Activated CD8-positive, alpha-beta T cell treated with anti-CD3 and anti-CD28 coated beads, Interleukin-2, amount 10 ng/mL, durations not matched to agents 7 days and 5 days (primary cell): ENCODE measurements at regions of chr11 and their contacts with region 1.

Region 1: GRCh38 chr11:60363542-60364510 is 14.5 kb upstream of the MS4A7 start:
- DNase-seq: peak; percentile 73
- ATAC-seq: peak; percentile 65
- H3K4me3 Mint-ChIP-seq: no peak overlapping the region
- H3K27ac Mint-ChIP-seq: no peak overlapping the region
- H3K4me1 Mint-ChIP-seq: no peaks in the 10 kb centered on the region
- H3K27me3 Mint-ChIP-seq: peaks cover 14% of the 10 kb centered on the region

Region 2: GRCh38 chr11:60288531-60288930 is 75.3 kb before region 1 on chr11:
- CTCF ChIA-PET with region 1: no interaction called
- POLR2A ChIA-PET with region 1: no interaction called
- DNase-seq: no peak
- ATAC-seq: no peak
- H3K4me3 Mint-ChIP-seq: no peak overlapping the region
- H3K27ac Mint-ChIP-seq: no peak overlapping the region
- H3K4me1 Mint-ChIP-seq: no peaks in the 10 kb centered on the region
- H3K27me3 Mint-ChIP-seq: no peaks in the 10 kb centered on the region

Region 3: DNA sequence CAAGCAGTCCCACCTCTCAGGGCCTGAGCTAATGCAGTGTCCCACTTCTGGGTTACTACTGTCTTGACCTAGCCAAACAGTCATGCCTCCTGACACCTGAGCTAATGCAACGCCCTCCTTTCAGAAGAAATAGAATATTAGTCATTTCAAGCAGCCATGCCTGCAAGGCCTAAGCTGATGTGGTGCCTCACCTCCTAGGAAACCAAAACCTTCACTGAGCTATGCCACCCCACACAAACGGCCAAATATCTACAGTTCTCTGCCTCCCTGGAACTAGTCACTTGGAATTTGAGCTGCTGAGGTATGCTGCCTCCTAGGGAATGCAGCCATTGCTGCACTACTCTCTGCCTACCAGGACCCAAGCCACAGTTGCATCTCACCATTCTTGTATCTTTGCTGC is 45.1 kb before region 1 on chr11:
- CTCF ChIA-PET with region 1: no interaction called
- POLR2A ChIA-PET with region 1: no interaction called
- DNase-seq: no peak
- ATAC-seq: no peak
- H3K4me3 Mint-ChIP-seq: no peak overlapping the region
- H3K27ac Mint-ChIP-seq: no peak overlapping the region
- H3K4me1 Mint-ChIP-seq: no peaks in the 10 kb centered on the region
- H3K27me3 Mint-ChIP-seq: peaks cover 2% of the 10 kb centered on the region

Region 4: GRCh38 chr11:60485986-60486385 is 122.2 kb after region 1 on chr11:
- CTCF ChIA-PET with region 1: interaction called, 10 read pairs
- POLR2A ChIA-PET with region 1: no interaction called
- DNase-seq: no peak
- ATAC-seq: no peak
- H3K4me3 Mint-ChIP-seq: no peak overlapping the region
- H3K27ac Mint-ChIP-seq: no peak overlapping the region
- H3K4me1 Mint-ChIP-seq: peaks cover 4% of the 10 kb centered on the region
- H3K27me3 Mint-ChIP-seq: peaks cover 13% of the 10 kb centered on the region

Region 5: DNA sequence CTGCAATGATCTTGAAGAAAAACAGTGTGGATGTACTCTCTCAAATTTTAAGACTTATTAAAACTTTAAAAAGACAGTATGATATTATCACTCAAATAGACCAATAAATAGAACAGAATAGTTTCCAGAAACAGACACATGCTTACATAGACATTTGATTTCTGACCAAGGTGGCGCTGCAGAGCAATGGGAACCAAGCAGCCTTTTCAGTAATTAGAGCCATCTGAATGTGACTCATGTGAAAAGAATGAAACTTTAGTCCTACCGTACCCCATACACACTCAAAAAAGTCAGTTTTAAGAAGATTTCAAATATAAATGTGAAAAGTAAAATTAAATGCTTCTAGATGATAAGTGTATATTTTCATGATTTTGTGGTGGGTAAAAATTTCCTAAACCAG is 261.4 kb after region 1 on chr11:
- CTCF ChIA-PET with region 1: interaction called, 33 read pairs
- POLR2A ChIA-PET with region 1: interaction called, 3 read pairs
- DNase-seq: no peak
- ATAC-seq: no peak
- H3K4me3 Mint-ChIP-seq: no peak overlapping the region
- H3K27ac Mint-ChIP-seq: no peak overlapping the region
- H3K4me1 Mint-ChIP-seq: no peaks in the 10 kb centered on the region
- H3K27me3 Mint-ChIP-seq: no peaks in the 10 kb centered on the region